Spleen (tissue), 13 donors: ENCODE measurements at regions of chr20 and their contacts with region 1.

Region 1: GRCh38 chr20:47487175-47487917 is 14.3 kb upstream of the NCOA3 start:
- DNase-seq: peak; percentile 78
- H3K4me3 ChIP-seq: peak overlapping the region in 1 of 8 donors; percentile 28
- H3K27ac ChIP-seq: peak overlapping the region; percentile 71 to 89 (median 81)
- H3K4me1 ChIP-seq: peaks cover 4 to 57% (median 48%) of the 10 kb centered on the region in 6 donors
- H3K27me3 ChIP-seq: no peaks in the 10 kb centered on the region
- CTCF ChIP-seq: no peak
- POLR2A ChIP-seq: no peak

Region 2: GRCh38 chr20:47411161-47411560 is 76.2 kb before region 1 on chr20:
- intact Hi-C with region 1: loop called (anchors 5 kb)
- DNase-seq: no peak
- H3K4me3 ChIP-seq: peak overlapping the region in 3 of 8 donors; percentile 12 to 57 (median 12)
- H3K27ac ChIP-seq: peak overlapping the region in 7 of 8 donors; percentile 35 to 97 (median 91)
- H3K4me1 ChIP-seq: peaks cover 9 to 81% (median 65%) of the 10 kb centered on the region in 6 donors
- H3K27me3 ChIP-seq: no peaks in the 10 kb centered on the region
- CTCF ChIP-seq: no peak
- POLR2A ChIP-seq: no peak

Region 3: DNA sequence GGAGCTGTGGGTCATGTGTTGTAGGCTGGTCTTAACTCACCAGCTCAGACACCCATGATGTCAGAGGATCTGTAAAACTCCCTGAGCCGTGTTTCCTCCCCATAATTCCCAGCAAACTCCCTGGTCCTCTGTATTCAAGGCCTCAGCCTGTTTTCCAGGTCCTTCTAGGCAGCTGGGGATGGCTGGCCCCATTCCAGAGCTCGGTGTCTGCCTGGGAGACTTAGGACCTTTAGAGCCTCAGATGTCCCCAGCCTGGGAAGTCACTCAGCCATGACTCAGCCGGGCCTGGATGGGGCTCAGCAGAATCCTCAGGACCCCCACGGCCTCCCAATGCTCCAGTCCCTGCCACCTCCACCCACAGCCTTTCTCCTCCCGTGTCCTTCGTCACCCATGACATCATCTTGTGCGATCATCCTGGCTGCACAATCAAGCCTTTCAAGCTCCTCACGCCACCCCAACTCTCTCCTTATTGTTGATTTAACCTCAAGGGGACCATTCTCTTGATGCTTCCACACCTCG is 773.0 kb after region 1 on chr20:
- intact Hi-C with region 1: no loop called
- DNase-seq: no peak
- H3K4me3 ChIP-seq: no peak overlapping the region
- H3K27ac ChIP-seq: no peak overlapping the region
- H3K4me1 ChIP-seq: no peaks in the 10 kb centered on the region
- H3K27me3 ChIP-seq: peaks cover 0 to 4% (median 0%) of the 10 kb centered on the region in 7 donors
- CTCF ChIP-seq: no peak
- POLR2A ChIP-seq: no peak